Activated B cell treated with CpG ODN at 0.5 μM for 24 hours (primary cell): ENCODE measurements at regions of chr9 and their contacts with region 1.

Region 1: GRCh38 chr9:6910032-6910431 is 152.3 kb downstream of the KDM4C start:
- DNase-seq: no peak
- ATAC-seq: no peak
- H3K4me3 Mint-ChIP-seq: no peak overlapping the region
- H3K27ac Mint-ChIP-seq: no peak overlapping the region
- H3K4me1 Mint-ChIP-seq: peaks cover 19% of the 10 kb centered on the region
- H3K27me3 Mint-ChIP-seq: no peaks in the 10 kb centered on the region
- CTCF ChIP-seq: no peak

Region 2: GRCh38 chr9:5760338-5760737 is 1149.7 kb before region 1 on chr9:
- CTCF ChIA-PET with region 1: no interaction called
- POLR2A ChIA-PET with region 1: no interaction called
- intact Hi-C with region 1: no loop called
- DNase-seq: no peak
- ATAC-seq: no peak
- H3K4me3 Mint-ChIP-seq: no peak overlapping the region
- H3K27ac Mint-ChIP-seq: no peak overlapping the region
- H3K4me1 Mint-ChIP-seq: peaks cover 13% of the 10 kb centered on the region
- H3K27me3 Mint-ChIP-seq: no peaks in the 10 kb centered on the region
- CTCF ChIP-seq: no peak

Region 3: GRCh38 chr9:6873857-6874256 is 36.2 kb before region 1 on chr9:
- CTCF ChIA-PET with region 1: no interaction called
- POLR2A ChIA-PET with region 1: no interaction called
- intact Hi-C with region 1: no loop called
- DNase-seq: no peak
- ATAC-seq: no peak
- H3K4me3 Mint-ChIP-seq: no peak overlapping the region
- H3K27ac Mint-ChIP-seq: no peak overlapping the region
- H3K4me1 Mint-ChIP-seq: peaks cover 44% of the 10 kb centered on the region
- H3K27me3 Mint-ChIP-seq: no peaks in the 10 kb centered on the region
- CTCF ChIP-seq: no peak

Region 4: DNA sequence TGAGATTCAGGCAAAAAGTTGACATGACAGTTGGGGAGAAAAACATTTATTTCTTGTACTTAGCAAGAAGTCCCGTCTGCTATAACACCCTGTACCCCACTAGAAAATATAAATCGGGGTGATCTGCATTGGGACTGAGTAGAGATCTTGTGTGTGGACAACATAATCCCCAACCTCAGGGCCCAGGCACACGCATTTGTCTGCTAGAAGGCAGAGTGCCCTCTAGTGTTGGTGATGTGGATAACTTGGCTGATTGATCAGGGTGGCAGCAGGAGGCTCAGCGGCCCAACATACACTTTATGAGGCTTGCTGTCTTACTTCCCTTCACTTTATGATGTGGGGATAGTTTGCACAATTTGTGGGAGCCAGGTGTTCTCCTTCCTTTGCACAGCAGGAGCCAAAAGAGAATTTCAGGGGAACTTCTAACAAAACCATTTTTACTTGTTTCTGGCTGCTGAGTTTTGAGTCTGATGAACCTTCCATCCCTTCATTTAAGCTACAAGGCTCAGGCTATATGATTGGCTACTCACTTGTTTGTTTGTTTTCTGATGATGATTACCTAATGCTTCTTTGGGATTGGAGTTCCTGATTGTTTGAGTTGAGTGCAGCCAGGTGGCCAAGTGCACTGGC is 626.4 kb after region 1 on chr9:
- CTCF ChIA-PET with region 1: no interaction called
- POLR2A ChIA-PET with region 1: no interaction called
- intact Hi-C with region 1: loop called (anchors 10 kb)
- DNase-seq: no peak
- ATAC-seq: no peak
- H3K4me3 Mint-ChIP-seq: no peak overlapping the region
- H3K27ac Mint-ChIP-seq: no peak overlapping the region
- H3K4me1 Mint-ChIP-seq: no peaks in the 10 kb centered on the region
- H3K27me3 Mint-ChIP-seq: peaks cover 5% of the 10 kb centered on the region
- CTCF ChIP-seq: no peak